ENCODE measurements at regions of chr7 and their contacts with region 1.

Region 1: DNA sequence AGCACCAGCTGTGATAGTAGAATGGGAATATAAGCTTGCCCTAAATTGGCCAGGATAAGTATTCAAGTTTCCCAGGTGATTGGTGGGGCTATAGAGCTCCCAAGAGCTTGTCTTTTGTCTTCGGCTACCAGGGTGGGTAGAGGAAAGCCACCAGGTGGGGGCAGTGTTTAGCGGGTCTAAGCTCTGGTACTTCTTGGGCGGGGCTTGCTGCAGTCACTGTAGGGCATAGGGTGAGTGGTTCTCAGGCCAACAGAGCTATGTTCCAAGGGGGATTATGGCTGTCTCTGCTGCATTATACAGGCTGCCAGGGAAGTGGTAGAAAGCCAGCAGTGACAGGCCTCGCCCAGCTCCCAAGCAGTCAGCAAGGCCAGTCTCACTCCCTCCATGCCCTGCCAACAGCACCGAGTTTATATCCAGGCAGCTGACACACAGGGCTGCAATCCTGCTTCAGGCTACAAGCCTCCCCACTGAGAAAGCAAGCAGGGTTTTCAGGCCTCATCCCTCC is 110.7 kb downstream of the ZNF467 start:
- DNase-seq: peak; percentile 88
- H3K4me3 Mint-ChIP-seq: no peak overlapping the region
- H3K27ac Mint-ChIP-seq: no peak overlapping the region
- H3K4me1 Mint-ChIP-seq: peaks cover 11% of the 10 kb centered on the region
- H3K27me3 Mint-ChIP-seq: peaks cover 68% of the 10 kb centered on the region
- CTCF ChIP-seq: peak; percentile 58

Region 2: DNA sequence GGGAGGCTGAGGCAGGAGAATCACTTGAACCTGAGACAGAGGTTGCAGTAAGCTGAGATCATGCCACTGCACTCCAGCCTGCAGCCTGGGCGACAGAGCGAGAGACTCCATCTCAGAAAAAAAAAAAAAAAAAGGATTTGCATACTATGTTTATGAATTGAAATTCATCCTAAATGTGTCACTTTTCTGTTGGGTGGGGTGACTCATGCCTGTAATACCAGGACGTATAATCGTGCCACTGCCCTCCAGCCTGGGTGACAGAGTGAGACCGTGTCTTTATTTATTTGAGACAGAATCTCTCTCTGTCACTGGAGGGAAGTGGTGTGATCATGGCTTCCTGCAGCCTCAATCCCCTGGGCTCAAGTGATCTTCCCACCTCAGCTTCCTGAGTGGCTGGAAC is 417.4 kb before region 1 on chr7:
- CTCF ChIA-PET with region 1: no interaction called
- intact Hi-C with region 1: no loop called
- DNase-seq: no peak
- H3K4me3 Mint-ChIP-seq: no peak overlapping the region
- H3K27ac Mint-ChIP-seq: no peak overlapping the region
- H3K4me1 Mint-ChIP-seq: peaks cover 8% of the 10 kb centered on the region
- H3K27me3 Mint-ChIP-seq: no peaks in the 10 kb centered on the region
- CTCF ChIP-seq: no peak

Region 3: DNA sequence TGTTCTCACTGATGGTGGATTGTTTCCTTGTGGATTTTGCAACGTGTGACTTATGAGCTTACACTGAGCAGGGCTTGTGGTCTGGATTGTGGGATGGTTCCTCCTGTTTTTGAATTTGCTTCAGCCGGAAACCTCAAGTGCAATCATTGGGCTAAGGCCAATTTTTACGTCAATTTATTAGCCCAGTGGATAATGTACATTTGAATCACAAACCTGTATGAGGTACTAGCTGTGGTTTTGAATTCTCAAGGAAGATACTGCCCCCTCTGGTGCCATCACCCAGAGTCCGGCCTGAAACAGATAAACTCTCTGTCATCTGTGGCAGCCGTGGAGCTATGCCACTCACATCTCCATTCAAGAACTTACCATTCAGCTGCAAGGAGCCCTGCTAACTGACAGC is 194.4 kb before region 1 on chr7:
- CTCF ChIA-PET with region 1: no interaction called
- intact Hi-C with region 1: no loop called
- DNase-seq: no peak
- H3K4me3 Mint-ChIP-seq: no peak overlapping the region
- H3K27ac Mint-ChIP-seq: no peak overlapping the region
- H3K4me1 Mint-ChIP-seq: no peaks in the 10 kb centered on the region
- H3K27me3 Mint-ChIP-seq: peaks cover 10% of the 10 kb centered on the region
- CTCF ChIP-seq: no peak

Region 4: DNA sequence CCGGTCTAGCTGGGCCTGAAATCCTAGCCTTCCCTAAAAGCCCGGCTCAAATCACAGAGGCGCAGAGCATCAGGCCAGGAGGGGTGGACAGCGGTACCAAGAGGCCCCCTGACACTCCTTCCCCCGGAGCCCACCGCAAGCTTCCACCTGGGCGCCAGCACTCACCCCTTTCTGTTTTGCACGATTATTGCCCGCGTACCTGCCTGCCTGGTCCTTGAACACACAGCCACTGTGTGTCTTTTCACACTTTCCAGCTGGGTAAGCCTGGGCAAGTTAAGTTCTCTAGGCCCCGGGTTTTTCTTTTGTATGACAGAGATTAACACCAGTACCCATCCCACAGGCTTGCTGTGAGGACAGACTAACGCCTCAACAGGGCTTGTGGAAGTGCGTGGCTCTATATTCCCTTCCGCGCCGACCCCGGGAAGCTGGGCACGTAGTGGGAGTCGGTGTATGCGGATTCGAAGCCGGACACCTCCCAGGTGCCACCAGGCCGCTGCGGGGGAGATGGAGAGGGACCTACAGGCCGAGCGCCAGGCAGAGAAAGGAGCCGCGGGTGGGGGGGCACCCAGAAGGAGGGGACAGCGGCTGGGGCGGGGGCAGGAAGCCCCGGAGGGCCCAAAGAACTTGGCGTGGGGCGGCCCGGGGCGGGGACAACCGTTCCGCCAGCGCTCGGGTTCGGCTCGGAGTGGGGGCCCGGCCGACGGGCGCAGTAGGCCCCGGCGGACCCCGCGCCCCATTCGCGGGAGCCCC is 165.8 kb before region 1 on chr7:
- CTCF ChIA-PET with region 1: no interaction called
- intact Hi-C with region 1: no loop called
- DNase-seq: peak; percentile 46
- H3K4me3 Mint-ChIP-seq: peak overlapping the region; percentile 96
- H3K27ac Mint-ChIP-seq: peak overlapping the region; percentile 81
- H3K4me1 Mint-ChIP-seq: peaks cover 9% of the 10 kb centered on the region
- H3K27me3 Mint-ChIP-seq: peaks cover 24% of the 10 kb centered on the region
- CTCF ChIP-seq: no peak

Region 5: GRCh38 chr7:149714050-149714909 is 51.6 kb after region 1 on chr7:
- CTCF ChIA-PET with region 1: interaction called, 13 read pairs
- intact Hi-C with region 1: no loop called
- DNase-seq: peak; percentile 87
- H3K4me3 Mint-ChIP-seq: peak overlapping the region; percentile 83
- H3K27ac Mint-ChIP-seq: no peak overlapping the region
- H3K4me1 Mint-ChIP-seq: peaks cover 23% of the 10 kb centered on the region
- H3K27me3 Mint-ChIP-seq: no peaks in the 10 kb centered on the region
- CTCF ChIP-seq: no peak

Region 6: DNA sequence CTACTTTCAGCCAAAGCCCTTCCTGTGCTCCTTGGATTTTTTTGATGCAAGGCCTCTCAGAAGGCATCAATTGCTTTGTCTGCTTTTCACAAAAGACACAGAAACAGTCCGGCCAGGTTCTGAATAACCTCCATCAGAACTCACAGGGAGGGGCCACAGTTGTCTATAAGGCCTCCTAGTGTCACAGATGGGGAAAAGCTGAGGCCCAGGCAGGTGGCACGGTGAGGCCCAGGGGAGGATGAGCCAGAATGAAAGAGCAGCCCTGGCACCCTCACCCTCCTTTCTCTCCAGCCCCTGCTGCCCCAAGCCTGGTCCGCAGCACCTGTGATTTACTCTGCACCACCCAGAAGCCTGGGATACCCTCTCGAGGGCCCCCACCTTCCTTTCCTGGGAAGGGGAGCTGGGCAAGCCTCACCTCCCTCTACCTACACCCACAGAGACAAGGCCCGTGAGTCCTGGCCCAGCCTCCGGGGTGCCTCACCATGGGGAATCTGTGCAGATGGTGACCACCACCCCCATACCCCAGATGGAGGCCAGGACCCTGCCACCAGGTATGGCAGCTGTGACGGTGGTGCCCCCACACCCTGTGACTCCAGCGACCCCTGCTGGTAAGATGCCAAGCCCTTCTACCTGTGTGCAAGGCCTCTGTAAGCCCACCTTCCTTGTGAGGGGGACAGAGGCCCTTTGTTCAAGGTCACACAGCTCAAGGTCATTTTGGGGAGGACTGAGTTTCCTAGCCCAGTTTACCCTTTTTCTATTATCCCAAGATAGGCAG is 136.9 kb after region 1 on chr7:
- CTCF ChIA-PET with region 1: interaction called, 9 read pairs
- intact Hi-C with region 1: loop called (anchors 2 kb)
- DNase-seq: peak; percentile 62
- H3K4me3 Mint-ChIP-seq: no peak overlapping the region
- H3K27ac Mint-ChIP-seq: no peak overlapping the region
- H3K4me1 Mint-ChIP-seq: no peaks in the 10 kb centered on the region
- H3K27me3 Mint-ChIP-seq: peaks cover 85% of the 10 kb centered on the region
- CTCF ChIP-seq: peak; percentile 54